Activated CD8-positive, alpha-beta T cell treated with anti-CD3 and anti-CD28 coated beads, Interleukin-2, amount 10 ng/mL, durations not matched to agents 7 days and 5 days (primary cell): ENCODE measurements at regions of chr10 and their contacts with region 1.

Region 1: GRCh38 chr10:43110338-43111086 is 27.7 kb upstream of the CSGALNACT2 start:
- DNase-seq: no peak
- ATAC-seq: no peak
- H3K4me3 Mint-ChIP-seq: no peak overlapping the region
- H3K27ac Mint-ChIP-seq: peak overlapping the region; percentile 61
- H3K4me1 Mint-ChIP-seq: peaks cover 35% of the 10 kb centered on the region
- H3K27me3 Mint-ChIP-seq: no peaks in the 10 kb centered on the region

Region 2: GRCh38 chr10:43120929-43121314 is 10.4 kb after region 1 on chr10:
- CTCF ChIA-PET with region 1: interaction called, 6 read pairs
- POLR2A ChIA-PET with region 1: interaction called, 14 read pairs
- DNase-seq: peak; percentile 85
- ATAC-seq: peak; percentile 88
- H3K4me3 Mint-ChIP-seq: peak overlapping the region; percentile 60
- H3K27ac Mint-ChIP-seq: peak overlapping the region; percentile 96
- H3K4me1 Mint-ChIP-seq: peaks cover 48% of the 10 kb centered on the region
- H3K27me3 Mint-ChIP-seq: no peaks in the 10 kb centered on the region

Region 3: GRCh38 chr10:43221419-43222209 is 111.1 kb after region 1 on chr10:
- CTCF ChIA-PET with region 1: no interaction called
- POLR2A ChIA-PET with region 1: no interaction called
- DNase-seq: no peak
- ATAC-seq: peak; percentile 63
- H3K4me3 Mint-ChIP-seq: no peak overlapping the region
- H3K27ac Mint-ChIP-seq: no peak overlapping the region
- H3K4me1 Mint-ChIP-seq: peaks cover 8% of the 10 kb centered on the region
- H3K27me3 Mint-ChIP-seq: peaks cover 22% of the 10 kb centered on the region